Activated naive CD4-positive, alpha-beta T cell treated with anti-CD3 and anti-CD28 coated beads for 36 hours (primary cell): ENCODE measurements at regions of chr16 and their contacts with region 1.

Region 1: GRCh38 chr16:11535471-11535870 is 51.2 kb downstream of the LITAF start:
- DNase-seq: no peak
- H3K4me3 Mint-ChIP-seq: no peak overlapping the region
- H3K27ac Mint-ChIP-seq: no peak overlapping the region
- H3K4me1 Mint-ChIP-seq: peaks cover 13% of the 10 kb centered on the region
- H3K27me3 Mint-ChIP-seq: no peaks in the 10 kb centered on the region

Region 2: GRCh38 chr16:11554053-11554452 is 18.6 kb after region 1 on chr16:
- CTCF ChIA-PET with region 1: interaction called, 12 read pairs
- intact Hi-C with region 1: no loop called
- DNase-seq: no peak
- H3K4me3 Mint-ChIP-seq: no peak overlapping the region
- H3K27ac Mint-ChIP-seq: peak overlapping the region; percentile 22
- H3K4me1 Mint-ChIP-seq: peaks cover 31% of the 10 kb centered on the region
- H3K27me3 Mint-ChIP-seq: no peaks in the 10 kb centered on the region

Region 3: DNA sequence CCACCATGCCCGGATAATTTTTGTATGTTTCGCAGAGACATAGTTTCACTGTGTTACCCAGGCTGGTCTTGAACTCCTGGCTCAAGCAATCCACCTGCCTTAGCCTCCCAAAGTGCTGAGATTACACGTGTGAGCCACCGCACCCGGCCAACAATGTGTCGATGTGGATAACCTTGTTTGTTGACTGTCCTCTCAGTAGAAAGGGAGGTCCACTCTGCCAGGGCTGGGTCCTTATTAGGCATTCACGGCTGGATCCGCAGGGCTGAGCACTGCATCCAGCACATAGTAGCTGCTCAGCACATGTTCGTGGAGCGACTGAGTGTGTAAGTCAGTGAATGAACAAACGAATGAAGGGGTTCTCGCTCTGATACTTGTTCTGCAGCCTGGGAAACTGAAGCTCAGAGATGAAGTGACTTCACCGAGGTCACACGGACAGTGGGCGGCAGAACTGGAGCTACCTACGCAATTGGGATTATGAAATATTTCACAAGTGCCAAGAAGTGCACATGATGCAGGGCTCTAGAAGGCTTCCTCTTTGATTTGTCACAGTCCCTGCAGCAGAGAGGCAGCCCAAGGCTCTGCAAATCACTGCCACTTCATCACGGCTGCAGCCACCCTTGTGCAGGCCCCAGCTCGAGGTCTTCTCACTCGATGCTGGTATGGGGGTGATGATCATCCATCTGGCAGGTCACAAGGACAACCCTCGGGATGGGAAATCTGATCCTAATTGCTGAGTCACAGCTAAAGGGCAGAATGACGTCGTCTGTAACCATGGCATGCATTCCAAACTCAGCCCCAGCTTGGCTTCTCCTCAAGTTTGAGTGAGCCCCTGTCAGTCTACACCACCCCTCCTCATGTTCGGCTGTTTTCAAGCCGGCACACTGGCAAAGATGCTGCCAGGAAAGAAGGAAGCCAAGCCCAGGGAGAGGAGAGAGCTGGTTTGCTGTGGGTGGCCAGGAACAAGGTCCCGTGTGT is 104.7 kb after region 1 on chr16:
- CTCF ChIA-PET with region 1: interaction called, 106 read pairs
- intact Hi-C with region 1: loop called (anchors 1 kb)
- DNase-seq: no peak
- H3K4me3 Mint-ChIP-seq: no peak overlapping the region
- H3K27ac Mint-ChIP-seq: no peak overlapping the region
- H3K4me1 Mint-ChIP-seq: peaks cover 11% of the 10 kb centered on the region
- H3K27me3 Mint-ChIP-seq: no peaks in the 10 kb centered on the region

Region 4: DNA sequence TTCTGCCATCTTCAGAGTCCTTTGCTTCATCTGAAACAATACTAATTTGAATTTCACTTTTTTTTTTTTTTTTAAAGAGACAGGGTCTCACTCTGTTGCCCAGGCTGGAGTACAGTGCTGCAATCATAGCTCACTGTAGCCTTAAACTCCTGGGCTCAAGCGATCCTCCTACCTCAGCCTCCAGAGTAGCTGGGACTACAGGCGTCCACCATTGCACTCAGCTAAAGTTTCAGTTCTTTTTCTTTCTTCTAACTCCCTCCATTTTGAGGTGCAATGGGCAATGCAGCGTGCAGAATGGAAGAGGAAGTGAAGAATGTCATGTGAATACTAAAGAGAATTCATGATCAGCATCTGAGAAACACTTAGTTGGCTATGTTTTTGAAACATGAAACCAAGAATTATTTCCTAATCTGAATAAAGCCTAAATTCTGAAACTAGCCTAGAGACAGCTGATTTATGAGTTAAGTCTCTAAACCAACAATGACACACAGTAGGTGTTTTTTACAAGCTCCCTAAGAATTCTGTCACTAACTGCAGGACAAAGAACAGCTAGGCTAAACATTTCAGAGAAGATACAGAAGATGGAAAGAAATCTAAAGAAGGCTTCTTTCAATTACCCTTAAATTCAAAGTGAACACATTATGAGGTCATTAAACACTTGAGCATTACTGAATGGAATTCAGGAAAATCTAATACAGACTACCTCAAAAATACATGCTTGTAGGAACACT is 153.7 kb after region 1 on chr16:
- CTCF ChIA-PET with region 1: interaction called, 11 read pairs
- intact Hi-C with region 1: no loop called
- DNase-seq: no peak
- H3K4me3 Mint-ChIP-seq: no peak overlapping the region
- H3K27ac Mint-ChIP-seq: peak overlapping the region; percentile 14
- H3K4me1 Mint-ChIP-seq: peaks cover 23% of the 10 kb centered on the region
- H3K27me3 Mint-ChIP-seq: no peaks in the 10 kb centered on the region

Region 5: DNA sequence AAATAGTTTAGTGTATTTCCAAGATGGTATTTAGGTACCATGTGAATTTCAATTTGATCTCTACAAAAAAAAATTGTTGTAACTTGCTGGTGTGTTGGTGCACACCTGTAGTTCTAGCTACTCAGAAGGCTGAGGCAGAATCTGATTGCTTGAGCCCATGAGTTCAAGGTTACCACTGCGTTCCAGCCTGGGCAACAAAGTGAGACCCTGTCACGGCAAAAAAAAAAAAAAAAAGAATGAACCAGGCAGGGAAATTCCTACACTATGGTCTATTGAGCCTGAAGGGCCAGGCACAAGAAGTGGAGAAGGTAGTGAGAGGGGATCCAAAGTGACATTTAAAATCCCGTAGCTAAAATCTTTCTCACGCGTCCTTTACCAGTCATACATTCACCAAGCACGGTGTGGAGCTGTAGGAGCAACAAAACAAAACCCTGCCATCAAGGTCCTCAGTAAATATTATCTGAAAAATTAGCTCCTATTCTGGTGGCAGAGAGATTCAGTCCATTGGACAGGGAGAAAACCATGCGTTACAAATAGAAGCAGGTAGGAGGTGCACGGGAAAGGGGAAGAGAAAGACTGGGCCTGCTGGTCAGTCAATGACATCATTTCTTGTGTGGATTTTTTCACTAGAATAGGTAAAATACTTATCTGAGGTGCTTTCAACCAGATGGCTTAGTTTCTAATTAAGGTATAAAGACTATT is 179.9 kb after region 1 on chr16:
- CTCF ChIA-PET with region 1: interaction called, 16 read pairs
- intact Hi-C with region 1: loop called (anchors 1 kb)
- DNase-seq: no peak
- H3K4me3 Mint-ChIP-seq: no peak overlapping the region
- H3K27ac Mint-ChIP-seq: no peak overlapping the region
- H3K4me1 Mint-ChIP-seq: peaks cover 6% of the 10 kb centered on the region
- H3K27me3 Mint-ChIP-seq: no peaks in the 10 kb centered on the region

Region 6: DNA sequence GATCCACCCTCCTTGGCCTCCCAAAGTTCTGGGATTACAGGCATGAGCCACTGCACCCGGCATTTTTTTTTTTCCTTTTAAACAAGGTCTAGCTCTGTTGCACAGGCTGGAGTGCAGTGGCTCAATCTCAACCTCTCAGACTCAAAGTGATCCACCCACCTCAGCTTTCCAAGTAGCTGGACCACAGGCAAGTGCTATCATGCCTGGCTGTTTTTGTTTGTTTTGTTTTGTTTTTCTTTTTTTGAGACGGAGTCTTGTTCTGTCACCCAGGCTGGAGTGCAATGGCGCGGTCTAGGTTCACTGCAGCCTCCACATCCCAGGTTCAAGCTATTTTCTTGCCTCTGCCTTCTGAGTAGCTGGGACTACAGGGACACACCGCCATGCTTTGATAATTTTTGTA is 280.6 kb after region 1 on chr16:
- CTCF ChIA-PET with region 1: interaction called, 4 read pairs
- intact Hi-C with region 1: loop called (anchors 1 kb)
- DNase-seq: no peak
- H3K4me3 Mint-ChIP-seq: no peak overlapping the region
- H3K27ac Mint-ChIP-seq: no peak overlapping the region
- H3K4me1 Mint-ChIP-seq: peaks cover 5% of the 10 kb centered on the region
- H3K27me3 Mint-ChIP-seq: no peaks in the 10 kb centered on the region